ENCODE measurements at regions of chr2 and their contacts with region 1.

Region 1: GRCh38 chr2:100818606-100819369 is 1.2 kb upstream of the NPAS2 start:
- DNase-seq: peak; percentile 68
- ATAC-seq: peak; percentile 71

Region 2: DNA sequence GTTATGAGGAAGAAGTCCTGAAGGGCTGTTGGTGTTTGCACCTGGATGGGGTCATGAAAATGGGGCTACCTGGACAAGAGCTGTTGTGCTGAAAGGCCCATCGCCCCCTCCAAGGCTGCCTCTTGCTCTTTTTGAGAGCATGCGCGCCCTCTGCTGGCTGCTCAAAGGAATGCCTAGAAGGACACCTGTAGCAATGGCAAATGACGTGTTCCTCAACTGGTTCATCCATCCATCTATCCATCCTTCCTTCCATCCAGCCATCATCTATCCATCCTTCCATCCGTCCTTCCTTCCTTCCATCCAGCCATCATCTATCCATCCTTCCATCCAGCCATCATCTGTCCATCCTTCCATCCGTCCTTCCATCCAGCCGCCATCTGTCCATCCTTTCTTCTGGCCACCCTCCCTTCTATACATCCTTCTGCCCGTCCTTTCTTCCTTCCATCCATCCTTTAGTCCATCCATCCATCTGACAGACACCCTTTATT is 166.1 kb after region 1 on chr2:
- intact Hi-C with region 1: loop called (anchors 10 kb)
- DNase-seq: peak; percentile 84
- ATAC-seq: peak; percentile 76